ENCODE measurements at regions of chr7 and their contacts with region 1.

Region 1: DNA sequence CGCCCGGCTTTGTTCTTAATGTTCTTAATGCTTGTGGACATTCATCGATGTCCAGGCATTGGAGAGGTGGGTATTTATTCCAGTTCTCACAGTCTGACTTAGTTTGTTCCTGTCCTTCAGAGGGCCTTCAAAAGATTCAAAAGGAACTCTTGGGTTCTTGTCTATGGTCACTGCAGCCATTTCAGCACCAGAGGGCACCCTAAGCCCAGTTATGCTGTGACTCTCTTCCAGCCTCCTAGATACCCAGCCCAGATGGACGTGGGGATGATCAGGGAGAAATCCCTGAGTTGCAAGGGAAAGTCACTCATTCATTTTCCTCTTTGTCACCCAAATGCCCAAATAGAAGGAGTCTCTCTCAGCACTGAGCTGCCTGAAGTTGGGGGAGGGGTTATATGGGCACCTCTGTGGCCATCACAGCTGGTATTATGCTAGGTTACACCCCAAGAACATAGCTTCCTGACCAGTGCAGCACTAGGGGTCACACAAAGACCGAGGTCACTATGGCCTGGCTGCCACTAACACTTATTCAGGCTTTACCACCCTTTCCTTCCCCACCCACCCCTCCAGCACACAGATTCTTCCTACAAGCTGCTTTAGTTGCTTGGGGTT is 26.5 kb upstream of the CCDC126 start:
- DNase-seq: peak; percentile 85

Region 2: DNA sequence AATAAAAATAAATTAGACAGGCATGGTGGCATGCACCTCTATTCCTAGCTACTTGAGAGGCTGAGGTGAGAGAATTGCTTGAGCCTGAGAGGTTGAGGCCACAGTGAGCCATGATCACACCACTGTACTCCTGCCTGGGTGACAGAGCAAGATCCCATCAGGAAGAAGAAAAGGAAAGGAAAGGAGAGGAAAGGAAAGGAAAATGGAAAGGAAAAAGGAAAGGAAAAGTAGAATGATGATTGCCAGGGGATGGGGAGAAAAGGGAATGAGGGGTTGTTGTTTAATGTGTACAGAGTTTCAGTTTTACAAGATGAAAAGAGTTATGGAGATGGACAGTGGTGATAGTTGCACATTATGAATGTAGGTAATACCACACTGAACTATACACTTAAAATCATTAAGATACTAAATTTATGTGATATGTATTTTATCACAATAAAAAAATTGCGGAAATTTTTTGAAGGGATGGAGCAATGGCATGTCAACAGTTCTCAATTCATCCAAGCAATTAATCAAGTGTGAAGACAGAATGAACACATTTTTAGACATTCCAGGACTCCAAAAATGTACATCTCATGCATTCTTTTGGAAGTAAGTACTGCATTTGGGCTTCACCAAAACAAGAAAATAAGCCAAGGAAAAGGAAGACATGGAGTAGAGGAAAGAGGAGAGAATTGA is 799.4 kb before region 1 on chr7:
- intact Hi-C with region 1: no loop called
- DNase-seq: no peak

Region 3: GRCh38 chr7:23531794-23532489 is 38.8 kb before region 1 on chr7 and contains the start of gene TRA2A:
- intact Hi-C with region 1: no loop called
- DNase-seq: peak; percentile 100
- total RNA-seq, gene TRA2A: 51.1 to 52.2 TPM

Region 4: GRCh38 chr7:23633417-23633816 is 62.7 kb after region 1 on chr7:
- intact Hi-C with region 1: no loop called
- DNase-seq: no peak

Region 5: DNA sequence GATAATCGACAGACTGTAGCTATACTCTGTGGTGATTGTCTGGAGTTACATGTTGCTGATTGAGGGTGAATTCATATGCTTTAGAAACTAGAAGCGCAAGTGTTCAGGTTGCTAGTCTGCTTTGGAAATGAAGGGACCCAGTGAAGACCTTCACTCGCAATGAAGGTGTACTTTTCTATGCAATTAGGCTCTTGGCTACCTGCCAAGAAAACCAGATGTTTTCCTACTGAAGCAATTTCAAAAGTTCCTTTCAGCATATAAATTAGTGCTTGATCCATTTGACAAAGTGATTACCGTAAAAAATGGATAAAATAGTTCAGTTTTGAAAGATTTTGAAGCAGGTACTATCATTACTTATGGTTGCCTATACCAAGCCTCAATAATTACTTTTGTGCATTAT is 129.4 kb after region 1 on chr7:
- intact Hi-C with region 1: loop called in 1 of 2 experiments (anchors 10 kb)
- DNase-seq: no peak

Region 6: GRCh38 chr7:23712368-23713284 is 141.9 kb after region 1 on chr7:
- intact Hi-C with region 1: loop called (anchors 5 to 10 kb)
- DNase-seq: no peak